A673 (cell line): ENCODE measurements at regions of chr17 and their contacts with region 1.

Region 1: GRCh38 chr17:63478791-63479494 is 2.1 kb downstream of the ACE start:
- DNase-seq: peak; percentile 84
- H3K4me3 ChIP-seq: no peak overlapping the region
- H3K27ac ChIP-seq: no peak overlapping the region
- H3K4me1 ChIP-seq: peaks cover 31% of the 10 kb centered on the region
- H3K27me3 ChIP-seq: no peaks in the 10 kb centered on the region
- CTCF ChIP-seq: peak; percentile 90

Region 2: GRCh38 chr17:63156986-63157385 is 322.0 kb before region 1 on chr17:
- CTCF ChIA-PET with region 1: no interaction called
- POLR2A ChIA-PET with region 1: no interaction called
- intact Hi-C with region 1: no loop called
- DNase-seq: no peak
- H3K4me3 ChIP-seq: no peak overlapping the region
- H3K27ac ChIP-seq: no peak overlapping the region
- H3K4me1 ChIP-seq: peaks cover 3% of the 10 kb centered on the region
- H3K27me3 ChIP-seq: no peaks in the 10 kb centered on the region
- CTCF ChIP-seq: no peak

Region 3: GRCh38 chr17:63434876-63435684 is 43.9 kb before region 1 on chr17:
- CTCF ChIA-PET with region 1: interaction called, 11 read pairs
- POLR2A ChIA-PET with region 1: no interaction called
- intact Hi-C with region 1: loop called (anchors 2 kb)
- DNase-seq: peak; percentile 90
- H3K4me3 ChIP-seq: peak overlapping the region; percentile 23
- H3K27ac ChIP-seq: peak overlapping the region; percentile 76
- H3K4me1 ChIP-seq: peaks cover 27% of the 10 kb centered on the region
- H3K27me3 ChIP-seq: no peaks in the 10 kb centered on the region
- CTCF ChIP-seq: peak; percentile 49